Mucosa of descending colon (tissue), 3 donors: ENCODE measurements at regions of chr18 and their contacts with region 1.

Region 1: DNA sequence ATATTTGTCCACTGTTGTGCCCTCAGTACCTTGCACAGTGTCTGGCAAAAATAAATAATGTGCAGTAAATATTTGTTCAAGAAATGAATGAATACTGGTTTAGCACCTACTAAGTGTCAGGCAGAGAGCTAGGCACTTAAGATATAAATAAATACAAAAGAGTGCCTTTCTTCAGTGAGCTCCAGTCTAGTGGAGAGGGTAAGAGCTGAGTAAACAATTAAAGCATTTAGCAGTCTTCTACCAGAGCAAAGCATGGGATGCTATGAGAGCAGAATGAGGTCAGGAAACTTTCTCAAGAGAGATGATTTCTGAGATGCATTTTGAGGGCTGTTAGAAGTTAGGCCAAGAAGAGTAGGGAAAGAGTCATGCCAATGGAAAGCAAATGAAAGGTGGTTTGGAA is 314.7 kb downstream of the DSC3 start:
- DNase-seq: no peak
- ATAC-seq: no peak
- H3K4me3 ChIP-seq: no peak overlapping the region
- H3K4me1 ChIP-seq: no peaks in the 10 kb centered on the region
- CTCF ChIP-seq: no peak

Region 2: DNA sequence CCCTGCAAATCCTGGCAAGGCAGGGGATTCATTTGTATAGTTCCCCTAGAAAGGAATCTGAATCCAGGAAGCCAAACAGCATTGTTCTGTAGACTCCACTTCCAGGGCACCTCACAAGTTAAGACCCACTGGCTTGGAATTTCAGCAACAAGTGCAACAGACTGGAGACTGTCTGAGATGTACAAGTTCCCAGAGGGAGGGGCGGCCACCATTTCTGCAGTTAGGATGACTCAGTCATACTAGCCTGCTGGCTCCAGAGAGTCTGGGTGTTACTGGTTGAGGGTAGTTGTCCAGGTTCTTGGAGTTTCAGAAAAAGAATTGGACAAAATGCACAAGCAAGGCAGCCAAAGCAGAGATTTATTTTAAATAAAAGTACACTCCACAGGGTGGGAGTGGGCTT is 69.5 kb before region 1 on chr18:
- intact Hi-C with region 1: loop called in 1 of 2 experiments (anchors 10 kb)
- DNase-seq: no peak
- ATAC-seq: no peak
- H3K4me3 ChIP-seq: no peak overlapping the region
- H3K4me1 ChIP-seq: no peaks in the 10 kb centered on the region
- CTCF ChIP-seq: no peak